ENCODE measurements at regions of chr9 and their contacts with region 1.

Region 1: DNA sequence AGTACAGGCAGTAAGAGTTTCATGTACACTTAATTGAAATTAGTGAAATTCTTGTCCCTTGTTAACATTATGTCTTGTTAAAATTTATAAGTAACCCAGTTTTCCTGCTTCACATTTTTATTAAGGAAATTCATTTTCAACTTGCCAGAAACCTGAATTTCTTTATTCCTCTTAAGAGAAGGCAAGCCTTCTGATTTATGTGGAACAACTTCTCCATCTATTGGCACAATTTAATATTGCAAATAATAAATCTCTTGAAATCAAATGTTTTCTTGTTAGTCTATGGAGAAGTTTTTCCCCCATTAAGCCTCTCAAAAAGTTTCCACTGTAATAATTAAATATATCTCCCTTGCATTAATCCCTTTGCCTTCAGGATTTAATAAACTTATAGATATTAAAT is 33.8 kb upstream of the ACO1 start:
- DNase-seq: no peak
- H3K4me3 ChIP-seq: no peak overlapping the region
- H3K4me3 Mint-ChIP-seq: no peak overlapping the region
- H3K27ac Mint-ChIP-seq: no peak overlapping the region
- H3K4me1 ChIP-seq: no peaks in the 10 kb centered on the region
- H3K4me1 Mint-ChIP-seq: no peaks in the 10 kb centered on the region
- H3K27me3 ChIP-seq: no peaks in the 10 kb centered on the region
- H3K27me3 Mint-ChIP-seq: peaks cover 8% of the 10 kb centered on the region
- CTCF ChIP-seq: no peak

Region 2: GRCh38 chr9:32117276-32117675 is 233.4 kb before region 1 on chr9:
- CTCF ChIA-PET with region 1: no interaction called
- POLR2A ChIA-PET with region 1: no interaction called
- intact Hi-C with region 1: no loop called
- DNase-seq: no peak
- H3K4me3 ChIP-seq: no peak overlapping the region
- H3K4me3 Mint-ChIP-seq: no peak overlapping the region
- H3K27ac Mint-ChIP-seq: no peak overlapping the region
- H3K4me1 ChIP-seq: no peaks in the 10 kb centered on the region
- H3K4me1 Mint-ChIP-seq: no peaks in the 10 kb centered on the region
- H3K27me3 ChIP-seq: no peaks in the 10 kb centered on the region
- H3K27me3 Mint-ChIP-seq: no peaks in the 10 kb centered on the region
- CTCF ChIP-seq: no peak

Region 3: GRCh38 chr9:32264170-32264862 is 86.4 kb before region 1 on chr9:
- CTCF ChIA-PET with region 1: no interaction called
- POLR2A ChIA-PET with region 1: no interaction called
- intact Hi-C with region 1: loop called (anchors 5 kb)
- DNase-seq: no peak
- H3K4me3 ChIP-seq: no peak overlapping the region
- H3K4me3 Mint-ChIP-seq: no peak overlapping the region
- H3K27ac Mint-ChIP-seq: no peak overlapping the region
- H3K4me1 ChIP-seq: no peaks in the 10 kb centered on the region
- H3K4me1 Mint-ChIP-seq: no peaks in the 10 kb centered on the region
- H3K27me3 ChIP-seq: no peaks in the 10 kb centered on the region
- H3K27me3 Mint-ChIP-seq: peaks cover 7% of the 10 kb centered on the region
- CTCF ChIP-seq: no peak

Region 4: GRCh38 chr9:32371279-32371678 is 20.6 kb after region 1 on chr9:
- CTCF ChIA-PET with region 1: no interaction called
- POLR2A ChIA-PET with region 1: no interaction called
- intact Hi-C with region 1: no loop called
- DNase-seq: no peak
- H3K4me3 ChIP-seq: no peak overlapping the region
- H3K4me3 Mint-ChIP-seq: no peak overlapping the region
- H3K27ac Mint-ChIP-seq: no peak overlapping the region
- H3K4me1 ChIP-seq: no peaks in the 10 kb centered on the region
- H3K4me1 Mint-ChIP-seq: no peaks in the 10 kb centered on the region
- H3K27me3 ChIP-seq: no peaks in the 10 kb centered on the region; the same call in 1 of the 2 replicates
- H3K27me3 Mint-ChIP-seq: peaks cover 9% of the 10 kb centered on the region
- CTCF ChIP-seq: no peak

Region 5: GRCh38 chr9:32801530-32801929 is 450.8 kb after region 1 on chr9:
- CTCF ChIA-PET with region 1: no interaction called
- POLR2A ChIA-PET with region 1: no interaction called
- intact Hi-C with region 1: no loop called
- DNase-seq: no peak
- H3K4me3 ChIP-seq: no peak overlapping the region
- H3K4me3 Mint-ChIP-seq: no peak overlapping the region
- H3K27ac Mint-ChIP-seq: no peak overlapping the region
- H3K4me1 ChIP-seq: no peaks in the 10 kb centered on the region
- H3K4me1 Mint-ChIP-seq: no peaks in the 10 kb centered on the region
- H3K27me3 ChIP-seq: no peaks in the 10 kb centered on the region
- H3K27me3 Mint-ChIP-seq: peaks cover 16% of the 10 kb centered on the region
- CTCF ChIP-seq: no peak

Measured in Caco-2 (cell line).